ENCODE measurements at regions of chr7 and their contacts with region 1.

Region 1: GRCh38 chr7:23558303-23558702 is 26.5 kb upstream of the TRA2A start:
- ATAC-seq: no peak
- H3K4me3 ChIP-seq: no peak overlapping the region
- H3K27ac ChIP-seq: no peak overlapping the region
- H3K4me1 ChIP-seq: no peaks in the 10 kb centered on the region

Region 2: GRCh38 chr7:23076774-23077173 is 481.5 kb before region 1 on chr7:
- in situ Hi-C with region 1: no loop called
- ATAC-seq: no peak
- H3K4me3 ChIP-seq: no peak overlapping the region
- H3K27ac ChIP-seq: no peak overlapping the region
- H3K4me1 ChIP-seq: peaks cover 3 to 10% of the 10 kb centered on the region in 2 donors

Region 3: DNA sequence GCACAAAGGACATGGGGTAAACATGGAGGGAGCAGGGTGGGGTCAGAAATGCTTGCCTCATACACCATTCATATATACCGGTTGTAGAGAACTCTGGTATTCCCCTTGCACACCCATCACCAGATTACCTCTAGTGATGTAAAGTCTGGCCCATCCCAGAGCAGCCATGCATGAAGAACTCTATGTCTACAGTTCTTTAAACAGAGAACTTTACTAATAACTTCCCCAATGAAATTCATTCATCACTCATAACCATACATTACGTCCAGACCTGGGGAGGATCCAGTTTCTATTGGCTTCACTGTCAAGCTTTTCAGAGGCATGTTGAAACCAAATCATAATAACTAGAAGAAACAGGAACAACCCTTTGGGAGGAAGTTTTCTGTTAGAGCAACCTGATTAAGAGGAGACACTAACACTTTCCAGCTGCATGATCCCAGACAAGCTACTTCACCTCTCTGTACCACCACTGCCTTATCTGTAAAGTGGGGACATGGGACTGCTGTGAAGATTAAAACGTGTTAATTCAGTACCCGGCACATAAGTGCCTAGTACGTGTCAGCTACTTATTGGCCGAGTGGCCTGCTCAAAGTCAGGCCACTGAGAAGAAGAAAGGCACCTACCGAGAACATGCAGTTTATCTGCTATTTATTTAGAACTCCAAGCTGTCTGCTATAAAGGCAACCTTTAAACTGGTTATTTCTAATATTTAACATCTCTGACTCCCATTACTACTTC is 147.7 kb before region 1 on chr7:
- in situ Hi-C with region 1: no loop called
- ATAC-seq: peak in 1 of 8 experiments; percentile 69
- H3K4me3 ChIP-seq: no peak overlapping the region
- H3K27ac ChIP-seq: no peak overlapping the region
- H3K4me1 ChIP-seq: no peaks in the 10 kb centered on the region

Region 4: DNA sequence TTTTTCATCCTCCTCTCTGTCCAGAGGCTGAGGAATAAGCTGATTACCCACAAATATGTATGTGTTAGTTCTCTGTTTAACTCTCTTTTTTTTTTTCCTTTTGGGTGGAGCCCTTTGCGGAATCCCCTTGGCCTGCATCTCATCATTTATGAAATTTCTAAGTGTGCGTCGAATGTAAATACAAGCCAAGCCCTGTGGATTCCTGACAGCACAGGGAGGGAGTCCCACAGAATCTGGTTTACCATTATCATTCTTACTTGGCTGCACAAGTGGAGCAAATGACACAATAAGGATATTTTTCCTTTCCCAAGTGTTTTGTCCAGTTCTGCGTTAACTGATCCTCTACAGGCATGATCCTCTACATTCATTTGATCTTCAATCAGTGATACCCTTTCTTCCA is 163.2 kb after region 1 on chr7:
- in situ Hi-C with region 1: loop called in 3 of 9 experiments (anchors 10 to 25 kb)
- ATAC-seq: peak in 3 of 8 experiments; percentile 93 to 98 (median 97)
- H3K4me3 ChIP-seq: no peak overlapping the region
- H3K27ac ChIP-seq: no peak overlapping the region
- H3K4me1 ChIP-seq: no peaks in the 10 kb centered on the region

Measured in motor neuron (in vitro differentiated cells).